ENCODE measurements at regions of chr4 and their contacts with region 1.

Region 1: GRCh38 chr4:118968005-118968404 is 79.4 kb downstream of the SYNPO2 start:
- DNase-seq: peak in 4 of 5 donors; percentile 48 to 65 (median 58)
- ATAC-seq: peak; percentile 57 to 83 (median 76)
- H3K4me3 ChIP-seq: peak overlapping the region in 3 of 12 donors; percentile 4 to 18 (median 5)
- H3K27ac ChIP-seq: peak overlapping the region; percentile 38 to 86 (median 72)
- H3K4me1 ChIP-seq: peaks cover 2 to 87% (median 51%) of the 10 kb centered on the region in 12 donors
- H3K27me3 ChIP-seq: no peaks in the 10 kb centered on the region
- CTCF ChIP-seq: no peak
- POLR2A ChIP-seq: no peak

Region 2: DNA sequence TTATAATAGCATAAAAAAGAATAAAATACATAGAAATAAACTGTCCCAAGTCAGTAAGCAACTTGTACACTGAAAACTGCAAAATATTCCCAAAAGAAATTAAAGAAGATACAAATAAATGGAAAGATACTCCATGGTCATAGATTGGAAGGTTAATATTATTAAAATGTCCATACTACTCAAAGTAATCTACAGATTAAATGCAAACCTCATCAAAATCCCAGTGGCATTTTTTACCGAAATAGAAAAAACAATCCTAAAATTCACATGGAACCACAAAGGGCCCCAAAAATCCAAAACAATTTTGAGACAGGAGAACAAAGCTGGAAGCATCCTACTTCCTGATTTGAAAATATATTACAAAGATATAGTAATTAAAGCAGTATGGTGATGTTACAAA is 800.7 kb before region 1 on chr4:
- intact Hi-C with region 1: no loop called
- DNase-seq: no peak
- ATAC-seq: no peak
- H3K4me3 ChIP-seq: no peak overlapping the region
- H3K27ac ChIP-seq: no peak overlapping the region
- H3K4me1 ChIP-seq: no peaks in the 10 kb centered on the region
- H3K27me3 ChIP-seq: no peaks in the 10 kb centered on the region
- CTCF ChIP-seq: no peak
- POLR2A ChIP-seq: no peak

Region 3: DNA sequence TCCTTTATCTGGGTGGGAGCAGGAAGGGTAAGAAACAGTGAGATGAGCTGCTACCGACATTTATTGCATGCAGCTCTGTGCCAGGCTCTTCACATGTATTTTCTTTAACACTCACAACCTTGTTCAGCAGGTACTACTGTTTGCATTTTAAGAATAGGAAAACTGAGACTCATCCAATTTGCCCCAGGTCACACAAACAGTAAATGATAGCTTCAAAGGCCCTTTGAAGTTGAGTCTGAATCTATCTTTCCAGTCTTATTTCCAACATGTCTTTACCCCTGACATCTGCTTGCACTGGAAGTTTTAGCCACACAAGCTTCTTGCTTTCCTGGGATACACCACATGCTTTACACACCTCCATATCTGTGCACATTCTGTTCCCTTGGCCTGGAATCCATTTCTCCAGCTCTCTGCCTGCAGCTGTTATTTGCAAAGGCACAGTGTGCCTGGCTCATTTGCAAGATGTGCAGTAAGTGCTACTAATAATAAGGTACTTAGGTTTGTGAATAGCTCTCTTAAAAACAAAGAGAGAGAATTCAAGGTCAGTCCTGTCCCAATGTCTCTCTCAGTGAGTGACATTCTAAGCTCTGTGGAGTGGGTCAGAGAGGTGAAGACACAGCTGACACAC is 221.6 kb before region 1 on chr4:
- intact Hi-C with region 1: loop called in 9 of 10 experiments (anchors 2 to 10 kb)
- DNase-seq: peak in 4 of 5 donors; percentile 51 to 79 (median 66)
- ATAC-seq: peak; percentile 93 to 96 (median 94)
- H3K4me3 ChIP-seq: no peak overlapping the region
- H3K27ac ChIP-seq: peak overlapping the region; percentile 61 to 86 (median 78)
- H3K4me1 ChIP-seq: peaks cover 0 to 60% (median 31%) of the 10 kb centered on the region in 12 donors
- H3K27me3 ChIP-seq: no peaks in the 10 kb centered on the region
- CTCF ChIP-seq: no peak
- POLR2A ChIP-seq: no peak

Region 4: GRCh38 chr4:118898684-118899138 is 69.3 kb before region 1 on chr4:
- intact Hi-C with region 1: loop called in 5 of 10 experiments (anchors 5 to 10 kb)
- DNase-seq: peak; percentile 50 to 83 (median 69)
- ATAC-seq: peak; percentile 88 to 93 (median 91)
- H3K4me3 ChIP-seq: peak overlapping the region in 1 of 12 donors; percentile 6
- H3K27ac ChIP-seq: peak overlapping the region; percentile 58 to 93 (median 88)
- H3K4me1 ChIP-seq: peaks cover 0 to 79% (median 44%) of the 10 kb centered on the region in 12 donors
- H3K27me3 ChIP-seq: no peaks in the 10 kb centered on the region
- CTCF ChIP-seq: no peak
- POLR2A ChIP-seq: peak in 1 of 2 donors; percentile 25

Region 5: GRCh38 chr4:119016636-119017035 is 48.6 kb after region 1 on chr4:
- intact Hi-C with region 1: no loop called
- DNase-seq: no peak
- ATAC-seq: peak in 1 of 4 donors; percentile 12
- H3K4me3 ChIP-seq: no peak overlapping the region
- H3K27ac ChIP-seq: peak overlapping the region in 7 of 12 donors; percentile 1 to 83 (median 55)
- H3K4me1 ChIP-seq: peaks cover 0 to 51% (median 16%) of the 10 kb centered on the region in 12 donors
- H3K27me3 ChIP-seq: no peaks in the 10 kb centered on the region
- CTCF ChIP-seq: no peak
- POLR2A ChIP-seq: no peak

Region 6: GRCh38 chr4:119050527-119051090 is 82.6 kb after region 1 on chr4:
- intact Hi-C with region 1: no loop called
- DNase-seq: no peak
- ATAC-seq: no peak
- H3K4me3 ChIP-seq: no peak overlapping the region
- H3K27ac ChIP-seq: no peak overlapping the region
- H3K4me1 ChIP-seq: peaks cover 0 to 37% (median 16%) of the 10 kb centered on the region in 12 donors
- H3K27me3 ChIP-seq: no peaks in the 10 kb centered on the region
- CTCF ChIP-seq: no peak
- POLR2A ChIP-seq: no peak

Measured in heart left ventricle (tissue), 16 donors.